Kidney (tissue), 22 donors: ENCODE measurements at regions of chr4 and their contacts with region 1.

Region 1: DNA sequence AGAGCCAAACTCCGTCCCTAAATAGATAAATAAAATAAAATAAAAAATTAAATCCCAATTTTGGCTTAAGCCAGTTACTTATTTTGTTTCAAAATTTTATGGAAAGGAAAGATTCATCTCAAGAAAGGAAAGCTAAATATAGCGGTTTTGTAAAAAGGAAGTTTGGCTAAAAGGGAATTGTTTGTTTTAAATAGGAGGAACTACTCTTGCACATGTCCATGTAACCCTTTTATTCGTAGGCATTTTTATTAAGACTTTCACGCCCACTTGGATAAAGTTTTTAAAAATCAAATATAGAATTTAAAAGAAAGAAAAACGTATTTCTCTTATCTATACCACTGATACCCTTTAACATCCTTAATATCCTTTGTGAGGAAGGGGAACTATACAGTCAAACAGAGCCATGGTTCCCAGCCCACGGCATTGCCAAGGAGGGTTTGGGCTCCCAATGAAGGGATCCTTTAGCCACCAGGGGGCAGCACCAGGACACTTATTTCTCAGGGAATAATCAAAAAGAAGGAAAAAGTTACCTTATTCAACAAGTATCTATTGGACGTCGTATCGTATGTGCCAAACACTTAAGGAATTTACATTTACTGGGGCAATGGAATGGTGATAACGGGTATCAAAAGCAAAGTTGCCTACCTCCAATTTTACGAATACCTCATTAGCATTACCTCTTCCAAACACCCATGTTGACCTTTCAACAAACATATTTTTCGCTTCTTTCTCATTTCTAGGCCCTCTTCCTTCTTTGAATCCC is 27.7 kb downstream of the CDKN2AIP start:
- DNase-seq: peak; percentile 83 to 92 (median 85)
- H3K4me3 ChIP-seq: peak overlapping the region in 2 of 3 donors; percentile 21 to 63
- H3K27ac ChIP-seq: no peak overlapping the region
- H3K4me1 ChIP-seq: peaks cover 0 to 6% (median 0%) of the 10 kb centered on the region in 3 donors
- H3K27me3 ChIP-seq: no peaks in the 10 kb centered on the region
- CTCF ChIP-seq: peak; percentile 80

Region 2: DNA sequence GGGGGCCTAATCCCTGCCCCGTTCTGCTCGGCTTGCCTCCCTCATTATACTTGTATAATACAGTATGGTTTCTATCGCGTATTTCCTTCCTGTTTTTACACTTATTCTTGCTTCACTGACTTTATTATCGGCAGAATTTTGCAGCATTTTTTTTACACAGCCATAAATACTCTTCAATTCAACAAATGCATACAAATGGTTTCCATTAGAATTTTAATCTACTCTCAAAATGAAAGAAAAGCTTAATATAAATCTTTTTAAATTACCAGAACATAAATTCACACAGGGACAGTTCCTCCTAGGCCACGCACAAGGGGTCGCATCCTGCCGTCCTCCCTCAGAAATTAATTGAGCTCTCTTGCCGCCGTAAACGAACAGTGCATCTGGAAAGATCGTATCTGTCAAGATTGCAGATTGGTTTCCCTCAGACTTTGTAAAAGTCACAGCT is 597.8 kb before region 1 on chr4:
- intact Hi-C with region 1: no loop called
- DNase-seq: peak in 2 of 5 donors; percentile 75 to 82
- H3K4me3 ChIP-seq: no peak overlapping the region
- H3K27ac ChIP-seq: no peak overlapping the region
- H3K4me1 ChIP-seq: no peaks in the 10 kb centered on the region
- H3K27me3 ChIP-seq: no peaks in the 10 kb centered on the region
- CTCF ChIP-seq: no peak

Region 3: DNA sequence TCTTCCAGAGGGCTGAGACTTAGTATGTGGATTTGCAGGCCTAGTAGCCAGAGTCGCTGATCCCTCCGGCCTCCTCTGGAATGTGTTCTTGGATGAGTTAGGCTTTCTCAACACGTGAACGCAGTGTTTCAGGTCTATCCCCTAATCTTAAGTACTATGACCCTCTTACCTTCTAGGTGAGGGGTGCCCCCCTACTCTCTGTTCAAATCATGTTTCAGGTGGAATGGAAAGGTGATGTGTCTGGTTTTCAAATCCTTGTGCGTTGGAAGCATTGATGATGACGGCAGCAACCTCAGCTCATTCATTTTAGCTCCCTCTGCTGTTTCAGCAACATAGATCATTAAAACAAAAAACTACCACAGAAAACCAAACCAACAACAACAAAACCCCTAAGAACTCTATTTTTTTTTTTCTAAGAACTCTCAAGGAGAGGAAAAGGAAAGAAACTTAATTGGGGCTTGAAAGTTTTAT is 130.5 kb after region 1 on chr4:
- intact Hi-C with region 1: loop called (anchors 10 kb)
- DNase-seq: peak in 1 of 5 donors; percentile 55
- H3K4me3 ChIP-seq: no peak overlapping the region
- H3K27ac ChIP-seq: no peak overlapping the region
- H3K4me1 ChIP-seq: no peaks in the 10 kb centered on the region
- H3K27me3 ChIP-seq: no peaks in the 10 kb centered on the region
- CTCF ChIP-seq: peak; percentile 38